ENCODE measurements at regions of chr3 and their contacts with region 1.

Region 1: DNA sequence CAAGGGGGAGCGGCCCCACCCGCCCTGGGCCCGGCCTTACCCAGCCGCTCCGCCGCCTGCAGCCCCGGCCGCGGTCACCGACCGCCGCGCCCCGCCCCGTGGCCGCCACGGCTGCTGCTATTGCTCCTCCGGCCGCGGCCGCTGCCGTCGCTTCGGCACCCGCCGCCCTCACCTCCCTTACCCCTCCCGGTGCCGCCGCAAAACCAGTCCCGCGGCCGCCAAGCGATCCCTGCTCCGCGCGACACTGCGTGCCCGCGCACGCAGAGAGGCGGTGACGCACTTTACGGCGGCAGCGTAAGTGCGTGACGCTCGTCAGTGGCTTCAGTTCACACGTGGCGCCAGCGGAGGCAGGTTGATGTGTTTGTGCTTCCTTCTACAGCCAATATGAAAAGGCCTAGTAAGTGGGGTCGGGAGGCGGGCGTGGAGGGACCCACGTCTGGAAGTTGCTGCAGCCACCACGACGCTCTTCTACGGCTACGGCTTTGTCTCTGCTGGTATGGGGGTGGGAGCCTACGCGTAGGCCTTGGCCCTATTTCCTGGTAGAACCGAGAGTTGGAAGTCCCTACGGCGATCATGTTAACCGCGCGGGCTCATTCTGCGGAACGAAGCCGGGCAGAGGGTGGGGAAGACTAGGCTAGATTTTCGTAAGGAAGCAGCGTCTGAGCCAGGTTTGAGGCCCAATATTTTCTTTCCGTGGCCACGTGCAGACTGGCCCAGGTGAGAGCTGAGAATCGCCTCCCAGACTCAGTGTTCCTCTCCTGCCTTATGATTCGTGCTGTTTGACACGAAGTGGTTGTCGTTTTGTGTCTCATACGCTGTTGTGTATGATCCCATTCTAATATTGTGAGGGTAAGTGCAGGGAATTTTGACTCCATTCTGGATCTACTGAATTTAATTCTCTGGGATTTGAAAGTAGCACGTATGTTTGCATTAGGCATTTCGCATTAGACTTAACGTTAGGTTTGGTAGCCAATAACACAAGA is at the starts of genes GNL3 and PBRM1:
- DNase-seq: peak; percentile 98
- H3K4me3 Mint-ChIP-seq: peak within 1 kb of the TSS; percentile 96
- H3K27ac Mint-ChIP-seq: peak within 1 kb of the TSS; percentile 99
- H3K4me1 Mint-ChIP-seq: peaks cover 57% of the 10 kb centered on the region
- H3K27me3 Mint-ChIP-seq: peaks cover 1% of the 10 kb centered on the region
- total RNA-seq, gene GNL3: 254 and 267 TPM in 2 replicates
- total RNA-seq, gene PBRM1: 65.7 and 67.8 TPM in 2 replicates

Region 2: DNA sequence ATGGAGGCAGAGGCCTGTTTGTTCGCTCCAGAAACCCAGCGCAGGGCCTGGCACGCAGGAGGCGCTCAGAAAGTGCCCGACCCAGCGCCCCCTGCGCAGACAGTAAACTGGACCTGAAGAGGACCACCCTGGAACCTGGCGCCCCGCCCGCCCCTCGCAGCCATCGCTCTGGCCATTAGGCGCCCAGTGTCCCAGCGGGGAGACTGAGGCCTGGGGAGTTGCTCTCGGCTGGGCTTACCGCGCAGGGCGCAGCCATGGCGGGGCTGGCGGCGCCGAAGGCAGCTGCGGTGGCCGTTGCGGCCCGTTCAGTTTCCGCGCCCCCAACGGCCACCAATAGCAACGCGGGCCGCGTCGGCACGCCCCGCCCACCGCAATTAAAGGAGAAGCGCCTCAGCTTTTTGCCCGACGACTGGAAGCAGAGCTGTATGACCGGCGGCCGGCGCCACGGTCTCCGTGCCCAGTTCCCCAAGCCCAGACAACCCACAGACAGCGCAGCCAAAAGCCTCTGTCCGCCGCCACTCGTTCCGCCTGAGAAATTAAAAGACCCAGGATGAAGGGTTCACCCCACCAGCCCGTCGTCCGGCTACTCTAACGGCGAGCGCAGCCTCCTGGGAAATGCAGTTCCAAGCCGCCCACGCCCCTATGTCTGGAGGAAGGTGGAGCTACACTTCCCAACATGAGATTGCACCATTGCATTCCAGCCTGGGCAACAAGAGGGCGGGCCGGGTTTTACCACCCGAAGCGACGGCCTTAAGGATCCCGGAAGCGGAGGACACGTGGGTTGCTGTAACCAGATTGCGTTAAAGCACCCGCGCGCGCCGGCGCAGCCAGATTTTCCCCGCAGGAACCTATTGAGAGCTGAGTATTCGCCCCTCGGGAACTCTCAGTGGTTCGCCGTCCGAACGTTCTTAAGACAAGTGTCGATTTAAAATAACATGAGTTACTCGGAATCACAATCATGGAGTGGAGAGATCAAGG is 531.6 kb before region 1 on chr3 and contains the start of gene POC1A:
- intact Hi-C with region 1: no loop called
- DNase-seq: peak; percentile 97
- H3K4me3 Mint-ChIP-seq: peak within 1 kb of the TSS; percentile 92
- H3K27ac Mint-ChIP-seq: peak within 1 kb of the TSS; percentile 97
- H3K4me1 Mint-ChIP-seq: peaks cover 20% of the 10 kb centered on the region
- H3K27me3 Mint-ChIP-seq: no peaks in the 10 kb centered on the region
- total RNA-seq, gene POC1A: 23.2 and 24.1 TPM in 2 replicates

Region 3: DNA sequence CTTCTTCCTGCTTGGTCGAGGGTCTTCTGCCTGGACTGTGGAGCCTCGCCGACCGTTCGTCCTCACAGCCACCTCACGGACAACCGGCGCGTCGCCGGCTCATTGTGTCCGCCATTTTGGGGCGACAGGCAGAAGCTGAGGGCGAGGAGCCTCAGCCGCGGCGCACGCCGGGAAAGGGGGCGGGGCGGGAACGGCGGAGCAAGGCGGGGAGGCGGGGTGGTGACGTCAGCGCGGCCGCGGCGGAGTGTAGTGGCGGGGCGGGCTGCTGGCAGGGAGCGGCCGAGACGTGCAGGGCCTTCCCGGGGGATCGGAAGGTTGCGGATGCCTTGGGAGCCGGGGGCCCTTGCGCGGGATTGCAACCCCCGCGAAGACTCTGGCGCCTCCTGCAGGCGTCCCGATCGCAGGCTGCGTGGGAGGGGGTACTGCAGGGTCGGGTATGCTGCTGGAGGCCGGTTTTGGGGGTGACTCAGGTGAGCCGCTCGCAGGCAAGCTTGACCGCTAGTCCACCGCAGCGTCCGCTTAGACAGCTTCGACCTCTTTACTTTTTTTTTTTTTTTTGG is 407.4 kb before region 1 on chr3 and contains the start of gene WDR82:
- intact Hi-C with region 1: loop called (anchors 10 kb)
- DNase-seq: peak; percentile 99
- H3K4me3 Mint-ChIP-seq: peak within 1 kb of the TSS; percentile 96
- H3K27ac Mint-ChIP-seq: peak within 1 kb of the TSS; percentile 96
- H3K4me1 Mint-ChIP-seq: peaks cover 64% of the 10 kb centered on the region
- H3K27me3 Mint-ChIP-seq: no peaks in the 10 kb centered on the region
- total RNA-seq, gene WDR82: 104 and 106 TPM in 2 replicates

Region 4: DNA sequence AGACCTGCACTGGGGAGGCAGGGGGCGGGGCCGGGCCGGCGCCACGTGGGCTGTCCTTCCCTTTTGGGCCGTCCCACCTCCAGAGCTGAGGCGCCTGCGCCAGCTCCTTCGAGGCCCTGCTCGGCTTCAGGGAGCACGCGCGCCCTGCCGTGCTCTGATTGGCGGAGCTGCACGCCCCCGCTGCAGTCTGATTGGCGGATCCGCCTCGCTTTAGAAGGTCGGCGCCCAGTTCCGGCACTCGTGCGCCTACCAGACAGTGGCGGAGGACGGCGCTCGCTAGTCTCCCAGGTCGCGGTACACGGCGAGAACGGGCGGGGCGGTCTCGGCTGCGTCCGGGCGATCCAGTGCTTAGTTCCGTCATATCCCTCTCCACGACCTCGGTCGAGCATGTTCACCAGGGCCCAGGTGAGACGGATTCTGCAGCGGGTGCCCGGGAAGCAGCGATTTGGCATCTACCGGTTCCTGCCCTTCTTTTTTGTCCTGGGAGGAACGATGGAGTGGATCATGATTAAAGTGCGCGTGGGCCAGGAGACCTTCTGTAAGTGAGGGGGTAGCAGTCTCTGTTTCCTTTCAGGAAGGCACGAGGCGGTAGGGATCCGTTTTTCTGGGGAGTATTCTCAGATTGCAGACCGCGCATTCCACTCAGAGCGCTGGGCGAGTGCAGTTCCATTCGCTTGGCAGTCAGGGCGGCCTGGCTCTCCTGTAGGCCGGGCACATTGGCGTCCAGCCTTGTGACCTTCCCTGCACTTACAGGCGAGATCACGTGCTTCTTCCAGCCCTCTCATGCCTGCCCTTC is 149.4 kb before region 1 on chr3 and contains the start of gene UQCC5:
- intact Hi-C with region 1: loop called (anchors 1 kb)
- DNase-seq: peak; percentile 99
- H3K4me3 Mint-ChIP-seq: peak within 1 kb of the TSS; percentile 98
- H3K27ac Mint-ChIP-seq: peak within 1 kb of the TSS; percentile 100
- H3K4me1 Mint-ChIP-seq: peaks cover 33% of the 10 kb centered on the region
- H3K27me3 Mint-ChIP-seq: no peaks in the 10 kb centered on the region
- total RNA-seq, gene UQCC5: 13.8 TPM in 2 replicates

Region 5: GRCh38 chr3:52670621-52671521 is 15.1 kb before region 1 on chr3:
- intact Hi-C with region 1: loop called (anchors 1 kb)
- DNase-seq: peak; percentile 81
- H3K4me3 Mint-ChIP-seq: peak overlapping the region; percentile 59
- H3K27ac Mint-ChIP-seq: peak overlapping the region; percentile 99
- H3K4me1 Mint-ChIP-seq: peaks cover 26% of the 10 kb centered on the region
- H3K27me3 Mint-ChIP-seq: no peaks in the 10 kb centered on the region

Region 6: DNA sequence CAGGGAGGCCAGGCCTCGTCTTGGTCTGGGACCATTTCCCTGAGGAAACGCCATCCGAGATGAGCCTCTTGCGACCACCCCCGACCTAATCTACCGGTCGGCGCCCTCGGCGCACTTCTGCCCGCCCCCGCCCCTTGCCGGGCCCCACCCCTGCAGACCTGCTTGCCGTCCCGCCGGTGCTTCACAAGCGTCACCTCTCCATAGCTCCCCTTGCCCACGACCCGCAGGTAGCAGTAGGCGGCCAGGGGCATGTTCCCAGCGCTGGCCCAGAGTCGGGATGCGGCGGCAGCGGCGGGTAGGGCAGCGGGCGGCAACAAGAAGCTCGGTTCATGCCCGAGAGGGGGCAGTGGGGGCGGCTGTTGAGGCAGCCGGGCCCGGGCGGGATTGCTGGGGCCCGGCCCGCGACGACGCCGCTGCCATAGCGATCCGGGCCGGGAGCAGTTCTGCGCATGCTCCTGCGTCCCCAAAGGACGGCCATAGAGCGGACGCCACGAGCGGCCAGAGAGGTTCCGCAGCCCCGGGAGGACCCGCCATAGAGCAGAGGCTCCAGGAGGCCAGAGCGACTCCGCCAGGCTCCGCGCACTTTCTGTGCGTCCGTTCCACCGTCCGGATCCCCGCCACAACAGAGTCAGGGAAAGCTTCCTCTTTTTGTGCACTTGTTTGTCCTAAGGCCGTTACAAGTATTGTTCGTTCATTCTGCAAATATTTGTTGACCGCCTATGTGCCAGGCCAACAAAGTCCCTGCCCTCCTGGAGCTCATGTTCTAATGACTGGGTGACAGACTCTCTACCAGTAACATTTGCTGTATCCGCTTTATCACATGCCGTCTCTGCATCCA is 84.7 kb after region 1 on chr3 and contains the start of gene NEK4:
- intact Hi-C with region 1: loop called (anchors 5 kb)
- DNase-seq: peak; percentile 95
- H3K4me3 Mint-ChIP-seq: peak within 1 kb of the TSS; percentile 88
- H3K27ac Mint-ChIP-seq: peak within 1 kb of the TSS; percentile 94
- H3K4me1 Mint-ChIP-seq: peaks cover 19% of the 10 kb centered on the region
- H3K27me3 Mint-ChIP-seq: no peaks in the 10 kb centered on the region
- total RNA-seq, gene NEK4: 29.4 and 30.3 TPM in 2 replicates

Measured in activated CD4-positive, alpha-beta T cell treated with anti-CD3 and anti-CD28 coated beads, Interleukin-2, amount 10 ng/mL, durations not matched to agents 24 days and 14 days (primary cell).